SK-N-SH (cell line): ENCODE measurements at regions of chr7 and their contacts with region 1.

Region 1: GRCh38 chr7:1225441-1226185 is 7.1 kb upstream of the UNCX start:
- DNase-seq: peak; percentile 95
- H3K4me3 ChIP-seq: no peak overlapping the region; a peak in 1 of 4 replicates
- H3K27ac ChIP-seq: no peak overlapping the region
- H3K4me1 ChIP-seq: peaks cover 0 to 3% of the 10 kb centered on the region in 2 experiments; a peak in 1 of 4 replicates
- H3K27me3 ChIP-seq: peaks cover 94% of the 10 kb centered on the region
- CTCF ChIP-seq: peak; percentile 98
- EP300 ChIP-seq: no peak
- RAD21 ChIP-seq: peak; percentile 72

Region 2: GRCh38 chr7:1144269-1144771 is 81.3 kb before region 1 on chr7:
- CTCF ChIA-PET with region 1: no interaction called
- POLR2A ChIA-PET with region 1: no interaction called
- DNase-seq: peak; percentile 92
- H3K4me3 ChIP-seq: peak overlapping the region in 1 of 2 experiments; percentile 20; a peak in 3 of 4 replicates
- H3K27ac ChIP-seq: peak overlapping the region in 1 of 2 experiments; percentile 41; a peak in 2 of 4 replicates
- H3K4me1 ChIP-seq: peaks cover 0 to 22% of the 10 kb centered on the region in 2 experiments; a peak in 2 of 4 replicates
- H3K27me3 ChIP-seq: no peaks in the 10 kb centered on the region
- CTCF ChIP-seq: peak; percentile 70
- EP300 ChIP-seq: no peak; a peak in 1 of 4 replicates
- RAD21 ChIP-seq: peak; percentile 99

Region 3: DNA sequence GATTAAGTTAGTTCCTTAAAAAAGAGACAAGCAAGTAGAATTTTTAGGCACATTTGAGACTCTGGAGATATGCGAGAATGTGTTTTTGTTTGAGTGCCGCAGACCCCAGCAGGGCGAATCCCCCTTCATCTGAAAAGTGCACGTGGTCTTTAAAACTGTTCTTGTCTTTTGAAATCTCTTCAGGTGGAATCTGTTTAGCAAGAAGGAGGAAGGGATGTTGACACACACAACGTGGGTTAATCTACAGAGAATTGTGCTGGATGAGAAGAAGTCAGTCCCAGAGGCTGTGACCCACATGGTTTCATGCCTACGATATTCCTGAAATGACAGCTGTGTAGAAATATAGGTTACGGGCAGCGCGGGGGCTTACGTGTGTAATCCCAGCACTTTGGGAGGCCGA is 38.5 kb before region 1 on chr7:
- CTCF ChIA-PET with region 1: interaction called, 36 read pairs
- POLR2A ChIA-PET with region 1: no interaction called
- DNase-seq: no peak
- H3K4me3 ChIP-seq: no peak overlapping the region
- H3K27ac ChIP-seq: no peak overlapping the region
- H3K4me1 ChIP-seq: no peaks in the 10 kb centered on the region; a peak in 1 of 4 replicates
- H3K27me3 ChIP-seq: peaks cover 62% of the 10 kb centered on the region
- CTCF ChIP-seq: no peak
- EP300 ChIP-seq: no peak
- RAD21 ChIP-seq: no peak

Region 4: DNA sequence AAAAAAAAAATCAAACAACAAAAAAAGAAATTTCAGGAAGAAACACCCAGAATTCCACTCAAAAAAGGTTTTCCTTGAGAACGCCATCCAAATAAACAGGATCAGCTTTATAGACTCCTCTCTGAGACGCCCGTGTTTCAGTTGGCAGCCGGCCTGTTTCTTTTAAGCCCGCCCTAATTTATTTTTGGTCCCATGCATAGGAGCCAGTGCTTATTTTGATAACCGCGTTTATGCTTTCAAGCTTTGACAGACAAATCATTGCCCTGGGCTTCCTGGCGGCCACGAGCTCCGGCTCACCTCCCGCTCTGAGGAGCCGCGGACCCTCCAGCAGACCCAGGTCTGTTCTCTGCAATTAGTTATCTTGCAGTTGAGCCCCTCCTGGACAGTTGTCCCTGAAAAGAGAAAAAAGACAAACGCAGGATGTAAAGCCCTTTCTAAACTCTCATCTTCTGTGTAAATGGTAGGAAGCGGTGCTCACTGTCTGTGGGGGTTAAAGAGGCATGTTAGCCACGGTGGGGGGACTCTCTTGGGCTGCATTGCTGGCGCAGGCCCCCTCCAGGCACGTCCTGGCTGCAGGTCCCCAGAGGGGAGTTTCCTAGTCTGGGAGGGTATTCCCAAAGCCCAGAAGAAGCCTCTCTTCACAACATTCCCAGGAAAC is 15.2 kb before region 1 on chr7:
- CTCF ChIA-PET with region 1: interaction called, 87 read pairs
- POLR2A ChIA-PET with region 1: interaction called, 3 read pairs
- DNase-seq: peak; percentile 64
- H3K4me3 ChIP-seq: no peak overlapping the region
- H3K27ac ChIP-seq: no peak overlapping the region
- H3K4me1 ChIP-seq: peaks cover 4 to 11% of the 10 kb centered on the region in 2 experiments; a peak in 1 of 4 replicates
- H3K27me3 ChIP-seq: peaks cover 99% of the 10 kb centered on the region
- CTCF ChIP-seq: no peak
- EP300 ChIP-seq: no peak
- RAD21 ChIP-seq: no peak

Region 5: GRCh38 chr7:1263497-1264275 is 38.1 kb after region 1 on chr7:
- CTCF ChIA-PET with region 1: interaction called, 60 read pairs
- POLR2A ChIA-PET with region 1: no interaction called
- DNase-seq: no peak
- H3K4me3 ChIP-seq: no peak overlapping the region
- H3K27ac ChIP-seq: no peak overlapping the region
- H3K4me1 ChIP-seq: no peaks in the 10 kb centered on the region
- H3K27me3 ChIP-seq: peaks cover 97% of the 10 kb centered on the region
- CTCF ChIP-seq: no peak
- EP300 ChIP-seq: no peak
- RAD21 ChIP-seq: no peak

Region 6: DNA sequence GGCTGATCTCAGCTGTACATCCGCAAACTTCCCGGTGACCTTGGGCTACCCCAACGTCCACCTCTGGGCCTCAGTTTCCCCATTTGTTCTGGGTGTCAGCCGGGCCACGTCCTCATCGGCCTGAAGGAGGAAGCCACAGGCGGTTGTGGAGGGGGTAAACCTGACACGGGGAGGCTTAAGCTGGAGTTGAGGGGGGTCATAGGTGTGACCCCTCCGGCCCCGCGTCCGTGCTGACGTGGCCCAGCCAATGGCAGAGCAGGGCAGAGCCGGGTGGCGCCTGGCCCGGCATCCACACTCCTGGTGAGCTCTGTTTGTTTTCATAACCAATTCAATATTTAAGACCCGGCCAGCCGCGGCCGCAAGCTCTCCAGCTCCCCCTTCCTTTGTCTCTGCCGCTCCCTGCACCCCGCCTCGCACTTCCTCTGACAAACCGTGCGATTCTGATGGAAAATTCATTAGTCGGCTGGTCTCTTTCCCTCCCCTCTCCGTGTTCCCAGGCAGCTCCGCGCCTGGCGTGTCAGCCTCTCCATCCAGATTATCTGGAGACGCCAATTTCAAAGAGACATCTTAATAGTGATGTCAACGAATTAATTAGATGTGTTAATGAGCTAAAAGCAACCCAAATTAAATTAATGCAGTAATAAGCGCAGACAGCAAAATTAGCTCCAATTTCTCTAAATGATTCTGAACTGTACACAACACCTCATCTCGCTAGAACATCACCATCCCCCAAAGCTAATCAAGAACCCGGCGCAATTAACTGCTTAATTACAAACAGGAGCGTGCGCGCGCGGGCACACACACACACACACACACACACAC is 178.2 kb after region 1 on chr7:
- CTCF ChIA-PET with region 1: interaction called, 218 read pairs
- POLR2A ChIA-PET with region 1: no interaction called
- DNase-seq: peak; percentile 77
- H3K4me3 ChIP-seq: no peak overlapping the region
- H3K27ac ChIP-seq: no peak overlapping the region
- H3K4me1 ChIP-seq: no peaks in the 10 kb centered on the region; a peak in 1 of 4 replicates
- H3K27me3 ChIP-seq: peaks cover 99% of the 10 kb centered on the region
- CTCF ChIP-seq: peak; percentile 17; the same call in 1 of the 2 replicates
- EP300 ChIP-seq: no peak
- RAD21 ChIP-seq: no peak

Region 7: GRCh38 chr7:1473864-1474512 is 248.4 kb after region 1 on chr7:
- CTCF ChIA-PET with region 1: interaction called, 16 read pairs
- POLR2A ChIA-PET with region 1: no interaction called
- DNase-seq: peak; percentile 97
- H3K4me3 ChIP-seq: no peak overlapping the region; a peak in 1 of 4 replicates
- H3K27ac ChIP-seq: no peak overlapping the region; a peak in 1 of 4 replicates
- H3K4me1 ChIP-seq: no peaks in the 10 kb centered on the region; a peak in 1 of 4 replicates
- H3K27me3 ChIP-seq: no peaks in the 10 kb centered on the region
- CTCF ChIP-seq: peak; percentile 93
- EP300 ChIP-seq: no peak
- RAD21 ChIP-seq: peak; percentile 80

Region 8: GRCh38 chr7:2060701-2061100 is 835.1 kb after region 1 on chr7:
- CTCF ChIA-PET with region 1: no interaction called
- POLR2A ChIA-PET with region 1: no interaction called
- DNase-seq: no peak
- H3K4me3 ChIP-seq: no peak overlapping the region; a peak in 1 of 4 replicates
- H3K27ac ChIP-seq: no peak overlapping the region
- H3K4me1 ChIP-seq: peaks cover 0 to 27% of the 10 kb centered on the region in 2 experiments; a peak in 2 of 4 replicates
- H3K27me3 ChIP-seq: no peaks in the 10 kb centered on the region
- CTCF ChIP-seq: no peak
- EP300 ChIP-seq: no peak
- RAD21 ChIP-seq: no peak